ENCODE measurements at regions of chr20 and their contacts with region 1.

Region 1: DNA sequence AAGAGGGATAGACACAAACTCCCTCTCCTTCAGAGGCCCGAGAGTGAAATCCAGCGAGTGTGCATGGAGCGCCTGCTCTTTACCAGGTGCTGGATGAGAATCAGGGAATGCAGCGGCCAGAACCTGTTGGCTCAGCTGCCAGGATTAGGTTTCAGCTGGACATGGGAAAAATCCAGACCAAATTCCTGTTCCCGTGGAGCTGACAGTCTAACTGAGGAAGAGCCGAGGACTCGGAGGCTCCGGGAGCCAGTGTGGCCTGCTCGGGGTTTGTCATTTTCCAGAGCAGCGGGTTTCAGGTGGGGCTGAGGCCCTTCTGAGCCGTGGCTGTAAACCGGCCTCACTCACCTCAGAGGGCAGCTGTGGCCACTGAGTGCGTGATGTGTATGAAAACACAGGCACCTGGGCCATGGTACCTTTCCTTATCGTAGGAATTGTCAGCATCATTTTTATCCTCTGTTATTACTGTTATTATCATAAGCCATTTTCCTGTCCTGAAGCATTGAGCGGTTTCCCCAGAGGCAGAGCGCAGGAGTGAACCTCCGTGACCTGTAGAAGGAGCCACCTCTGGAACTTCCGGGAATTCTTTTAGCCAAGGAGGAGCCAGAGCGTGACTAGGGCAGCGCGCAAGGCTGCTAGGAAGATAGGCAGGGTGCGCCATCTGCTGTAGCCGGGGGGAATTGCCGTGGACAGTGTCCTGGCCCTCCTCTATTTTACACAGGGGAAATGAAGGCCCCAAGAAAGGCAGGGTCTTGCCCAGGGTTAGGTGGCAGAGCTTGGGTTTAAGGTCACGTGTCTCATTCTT is 27.3 kb downstream of the PKIG start:
- DNase-seq: peak; percentile 92
- ATAC-seq: peak; percentile 99
- H3K4me3 ChIP-seq: peak overlapping the region; percentile 15
- H3K27ac ChIP-seq: peak overlapping the region; percentile 69
- H3K4me1 ChIP-seq: peaks cover 33% of the 10 kb centered on the region
- H3K27me3 ChIP-seq: no peaks in the 10 kb centered on the region
- CTCF ChIP-seq: peak; percentile 98

Region 2: GRCh38 chr20:44310664-44311639 is 298.8 kb before region 1 on chr20 and contains the start of gene FITM2:
- intact Hi-C with region 1: no loop called
- DNase-seq: peak; percentile 100
- ATAC-seq: peak; percentile 99
- H3K4me3 ChIP-seq: peak within 1 kb of the TSS; percentile 97
- H3K27ac ChIP-seq: peak within 1 kb of the TSS; percentile 79
- H3K4me1 ChIP-seq: peaks cover 9% of the 10 kb centered on the region
- H3K27me3 ChIP-seq: no peaks in the 10 kb centered on the region
- CTCF ChIP-seq: peak; percentile 95
- total RNA-seq, gene FITM2: 12.6 TPM

Region 3: DNA sequence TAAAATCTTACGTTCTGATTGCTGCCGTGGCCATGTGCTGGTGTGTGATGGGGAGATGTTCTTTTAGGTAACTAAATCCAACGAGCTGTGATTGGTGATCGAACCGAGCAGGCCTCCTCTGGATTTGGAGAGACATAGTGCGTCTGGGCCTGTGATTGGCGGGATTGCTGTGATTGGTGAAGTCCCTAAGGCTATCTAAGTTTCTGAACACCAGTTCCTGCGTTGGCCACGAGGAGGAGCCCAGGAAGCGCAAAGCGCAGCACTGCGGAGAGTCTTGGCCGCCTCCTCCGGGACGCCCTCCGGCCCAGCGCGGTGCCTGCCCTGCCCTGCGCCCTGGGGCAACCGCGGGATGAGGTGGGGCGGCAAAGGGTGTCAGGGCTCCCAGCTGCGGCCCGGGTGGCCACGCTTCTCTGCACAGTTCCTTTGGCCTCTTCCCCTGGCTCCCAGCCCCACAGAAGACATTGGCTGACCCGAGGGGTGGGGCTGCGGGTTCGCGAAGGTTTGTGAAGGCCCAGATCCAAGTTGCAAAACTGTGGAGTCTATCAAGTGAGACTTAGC is 221.2 kb before region 1 on chr20:
- intact Hi-C with region 1: loop called (anchors 10 kb)
- DNase-seq: peak; percentile 82
- ATAC-seq: peak; percentile 91
- H3K4me3 ChIP-seq: no peak overlapping the region
- H3K27ac ChIP-seq: no peak overlapping the region
- H3K4me1 ChIP-seq: no peaks in the 10 kb centered on the region
- H3K27me3 ChIP-seq: peaks cover 9% of the 10 kb centered on the region
- CTCF ChIP-seq: peak; percentile 73

Region 4: DNA sequence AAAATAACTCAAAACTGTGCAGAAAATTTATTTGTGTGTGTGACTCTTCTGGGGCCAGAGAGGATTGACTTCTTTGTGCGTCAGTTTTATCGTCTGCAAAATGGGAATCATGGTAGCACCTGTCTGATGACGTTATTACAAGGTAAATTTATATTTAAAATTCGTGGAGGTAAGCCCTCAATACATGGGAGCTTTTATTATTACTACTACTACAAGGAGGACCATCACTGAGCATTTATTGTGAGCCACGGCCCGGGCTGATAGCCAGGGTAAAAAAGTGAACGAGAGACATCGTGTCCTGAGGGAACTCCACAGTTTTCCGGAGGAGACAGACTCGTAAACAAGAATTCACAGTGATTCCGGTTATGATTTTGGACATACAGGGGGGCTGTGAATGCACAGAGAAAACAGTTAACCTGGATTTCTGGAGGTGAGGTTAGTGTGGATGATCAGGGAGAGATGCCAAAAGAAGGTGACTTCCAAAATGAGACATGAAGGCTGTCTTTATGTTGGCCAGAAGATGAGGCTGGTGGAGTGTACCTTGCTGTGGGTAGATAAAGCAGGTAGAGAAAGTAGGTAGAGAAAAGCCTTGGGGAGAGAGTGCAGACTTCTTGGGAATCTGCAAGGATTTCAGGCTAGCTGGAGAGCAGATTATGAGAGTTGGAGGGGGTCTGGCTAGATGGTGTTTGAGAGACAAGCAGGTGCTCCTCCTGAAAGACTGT is 77.3 kb before region 1 on chr20:
- intact Hi-C with region 1: loop called (anchors 10 kb)
- DNase-seq: no peak
- ATAC-seq: no peak
- H3K4me3 ChIP-seq: peak overlapping the region; percentile 78
- H3K27ac ChIP-seq: peak overlapping the region; percentile 83
- H3K4me1 ChIP-seq: peaks cover 23% of the 10 kb centered on the region
- H3K27me3 ChIP-seq: no peaks in the 10 kb centered on the region
- CTCF ChIP-seq: no peak